HEK293T (cell line): ENCODE measurements at regions of chr5 and their contacts with region 1.

Region 1: DNA sequence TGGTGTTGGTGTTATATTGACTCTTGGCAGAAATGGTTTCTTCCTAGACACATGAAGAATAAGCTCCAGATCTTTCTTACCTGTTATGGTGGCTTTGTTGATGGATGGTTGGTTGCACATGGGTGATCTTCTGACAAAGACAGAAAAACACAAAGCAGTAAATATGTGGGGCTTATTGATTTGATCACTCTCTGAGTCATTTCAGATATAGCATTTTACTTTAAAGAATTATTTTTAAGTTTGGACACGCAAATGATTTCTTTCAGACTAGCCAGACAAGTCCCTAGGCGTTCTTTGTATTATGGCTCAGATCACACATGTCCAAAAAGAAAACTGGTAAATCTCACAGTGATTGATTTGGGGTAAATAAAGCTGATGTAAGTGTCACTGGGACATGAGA is 597.6 kb downstream of the RAB3C start:
- DNase-seq: no peak

Region 2: DNA sequence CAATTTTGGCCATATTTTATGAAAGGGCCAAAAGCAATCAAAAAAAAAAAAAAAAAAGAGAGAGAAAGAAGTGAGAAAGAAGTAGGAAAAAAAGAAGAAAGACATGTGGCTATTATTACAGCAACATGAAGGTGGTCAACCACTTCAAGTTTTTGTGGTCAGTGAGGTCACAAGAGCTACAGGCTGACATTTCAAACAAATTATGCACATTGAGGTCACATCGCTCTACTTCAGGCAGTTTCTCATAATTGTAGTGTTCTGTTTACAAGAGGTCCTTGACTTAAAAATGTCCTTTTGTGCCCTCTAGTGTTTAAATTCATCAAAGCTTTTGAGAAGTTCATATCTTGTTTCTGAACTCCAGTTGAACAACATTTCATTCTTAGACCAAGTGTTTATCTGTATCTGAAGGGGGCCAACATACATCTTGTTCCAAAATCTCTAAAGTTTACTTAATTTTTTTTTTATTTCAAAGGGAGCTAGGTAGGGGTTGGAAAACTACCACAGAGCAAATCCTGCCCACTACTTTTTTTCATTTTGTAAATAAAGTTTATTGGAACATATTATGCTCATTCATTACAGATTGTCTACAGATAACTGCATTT is 199.9 kb after region 1 on chr5:
- CTCF ChIA-PET with region 1: interaction called, 12 read pairs
- POLR2A ChIA-PET with region 1: no interaction called
- DNase-seq: peak; percentile 45